PC-3 (cell line): ENCODE measurements at regions of chr1 and their contacts with region 1.

Region 1: GRCh38 chr1:167268398-167268787 is 47.7 kb downstream of the POU2F1 start:
- DNase-seq: no peak
- ATAC-seq: no peak
- H3K4me3 ChIP-seq: no peak overlapping the region
- H3K27ac ChIP-seq: no peak overlapping the region
- H3K4me1 ChIP-seq: peaks cover 14% of the 10 kb centered on the region
- H3K27me3 ChIP-seq: no peaks in the 10 kb centered on the region
- CTCF ChIP-seq: no peak

Region 2: GRCh38 chr1:167342846-167343245 is 74.5 kb after region 1 on chr1:
- CTCF ChIA-PET with region 1: interaction called, 22 read pairs
- POLR2A ChIA-PET with region 1: no interaction called
- intact Hi-C with region 1: loop called (anchors 1 kb)
- DNase-seq: peak; percentile 58
- ATAC-seq: peak; percentile 87
- H3K4me3 ChIP-seq: no peak overlapping the region
- H3K27ac ChIP-seq: no peak overlapping the region
- H3K4me1 ChIP-seq: no peaks in the 10 kb centered on the region
- H3K27me3 ChIP-seq: no peaks in the 10 kb centered on the region
- CTCF ChIP-seq: peak; percentile 60

Region 3: GRCh38 chr1:167442124-167442848 is 173.9 kb after region 1 on chr1:
- CTCF ChIA-PET with region 1: interaction called, 4 read pairs
- POLR2A ChIA-PET with region 1: interaction called, 4 read pairs
- intact Hi-C with region 1: loop called (anchors 1 kb)
- DNase-seq: peak; percentile 99
- ATAC-seq: peak; percentile 99
- H3K4me3 ChIP-seq: peak overlapping the region; percentile 25; the same call in 1 of the 2 replicates
- H3K27ac ChIP-seq: peak overlapping the region; percentile 73
- H3K4me1 ChIP-seq: peaks cover 30% of the 10 kb centered on the region
- H3K27me3 ChIP-seq: no peaks in the 10 kb centered on the region
- CTCF ChIP-seq: peak; percentile 99